Heart right ventricle (tissue), 16 donors: ENCODE measurements at regions of chr6 and their contacts with region 1.

Region 1: DNA sequence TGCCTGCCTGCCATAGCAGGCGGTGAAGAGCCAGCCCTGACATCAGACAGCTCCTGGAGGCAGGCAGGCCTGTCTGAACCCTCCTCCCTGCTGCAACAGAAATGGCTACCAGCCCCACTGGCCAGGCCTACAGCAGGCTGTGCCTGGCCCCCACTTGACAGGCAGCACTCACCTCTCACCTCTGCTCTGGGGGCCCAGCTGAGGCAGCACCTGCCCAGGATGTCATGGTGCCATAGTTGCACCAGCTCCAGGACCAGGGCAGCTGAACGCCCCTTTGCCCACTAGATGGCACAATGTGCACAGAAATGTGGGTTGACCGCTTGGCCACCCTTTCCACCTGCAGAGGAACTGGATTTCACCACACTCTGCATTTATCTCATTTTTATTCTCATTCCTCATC is 30.6 kb downstream of the MRPL14 start:
- DNase-seq: peak; percentile 67 to 76
- ATAC-seq: peak; percentile 60 to 86 (median 80)
- H3K4me3 ChIP-seq: no peak overlapping the region
- H3K27ac ChIP-seq: no peak overlapping the region
- H3K4me1 ChIP-seq: peaks cover 0 to 12% (median 0%) of the 10 kb centered on the region in 9 donors
- H3K27me3 ChIP-seq: no peaks in the 10 kb centered on the region
- CTCF ChIP-seq: peak; percentile 58 to 88 (median 81)

Region 2: GRCh38 chr6:44058617-44059358 is 37.8 kb before region 1 on chr6:
- intact Hi-C with region 1: no loop called
- DNase-seq: peak; percentile 63 to 83
- ATAC-seq: peak; percentile 50 to 85 (median 74)
- H3K4me3 ChIP-seq: peak overlapping the region in 4 of 10 donors; percentile 11 to 24 (median 14)
- H3K27ac ChIP-seq: peak overlapping the region; percentile 11 to 97 (median 76)
- H3K4me1 ChIP-seq: peaks cover 26 to 89% (median 74%) of the 10 kb centered on the region in 9 donors
- H3K27me3 ChIP-seq: no peaks in the 10 kb centered on the region
- CTCF ChIP-seq: no peak

Region 3: DNA sequence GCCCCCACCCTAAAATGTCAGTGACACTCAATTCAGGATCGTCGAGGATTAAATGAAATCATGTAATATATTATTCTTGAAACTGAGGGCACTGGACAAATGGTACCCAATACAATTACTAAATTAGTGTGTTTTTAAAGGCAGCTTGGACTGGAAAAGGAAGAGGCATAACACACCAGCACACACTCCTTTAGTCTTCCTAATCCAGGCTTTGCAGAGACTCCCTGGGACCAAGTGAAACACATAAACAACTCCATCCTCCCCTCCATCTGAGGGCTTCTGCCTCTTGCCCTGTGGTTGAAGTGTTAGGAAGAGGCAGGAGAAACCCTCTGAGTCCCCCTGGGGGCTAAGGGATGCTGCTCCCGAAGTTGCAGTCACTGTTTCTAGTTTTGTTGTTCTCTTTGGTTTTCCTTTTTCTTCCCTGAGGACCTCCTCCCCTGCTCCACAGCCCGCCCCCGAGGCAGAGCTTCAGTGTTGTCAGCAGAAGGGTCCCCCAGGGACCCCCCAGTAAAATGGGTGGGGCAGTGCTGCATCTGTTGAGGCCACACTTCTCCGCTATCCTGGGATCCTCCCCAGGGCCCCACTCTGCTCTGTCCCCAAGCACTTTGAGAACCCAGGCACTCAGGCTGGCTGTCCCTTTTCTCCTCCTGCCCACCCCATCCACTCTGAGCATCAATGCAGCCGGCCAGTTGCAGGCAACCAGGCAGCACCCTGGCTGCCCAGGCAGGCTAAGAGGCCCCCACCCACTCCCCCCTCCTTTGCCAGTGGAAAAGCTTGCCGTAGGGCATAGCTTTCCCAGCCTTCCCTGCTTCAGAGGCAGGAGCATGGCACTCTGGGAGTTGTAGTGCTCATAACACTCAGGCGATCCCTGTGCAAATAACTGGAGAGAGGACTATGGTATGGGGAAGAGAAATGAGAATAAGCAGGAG is 36.7 kb after region 1 on chr6:
- intact Hi-C with region 1: loop called in 3 of 10 experiments (anchors 5 kb)
- DNase-seq: peak; percentile 51 to 52
- ATAC-seq: peak; percentile 72 to 90 (median 80)
- H3K4me3 ChIP-seq: peak overlapping the region in 5 of 10 donors; percentile 1 to 28 (median 26)
- H3K27ac ChIP-seq: peak overlapping the region in 6 of 10 donors; percentile 31 to 57 (median 41)
- H3K4me1 ChIP-seq: peaks cover 2 to 37% (median 16%) of the 10 kb centered on the region in 9 donors
- H3K27me3 ChIP-seq: no peaks in the 10 kb centered on the region
- CTCF ChIP-seq: no peak

Region 4: DNA sequence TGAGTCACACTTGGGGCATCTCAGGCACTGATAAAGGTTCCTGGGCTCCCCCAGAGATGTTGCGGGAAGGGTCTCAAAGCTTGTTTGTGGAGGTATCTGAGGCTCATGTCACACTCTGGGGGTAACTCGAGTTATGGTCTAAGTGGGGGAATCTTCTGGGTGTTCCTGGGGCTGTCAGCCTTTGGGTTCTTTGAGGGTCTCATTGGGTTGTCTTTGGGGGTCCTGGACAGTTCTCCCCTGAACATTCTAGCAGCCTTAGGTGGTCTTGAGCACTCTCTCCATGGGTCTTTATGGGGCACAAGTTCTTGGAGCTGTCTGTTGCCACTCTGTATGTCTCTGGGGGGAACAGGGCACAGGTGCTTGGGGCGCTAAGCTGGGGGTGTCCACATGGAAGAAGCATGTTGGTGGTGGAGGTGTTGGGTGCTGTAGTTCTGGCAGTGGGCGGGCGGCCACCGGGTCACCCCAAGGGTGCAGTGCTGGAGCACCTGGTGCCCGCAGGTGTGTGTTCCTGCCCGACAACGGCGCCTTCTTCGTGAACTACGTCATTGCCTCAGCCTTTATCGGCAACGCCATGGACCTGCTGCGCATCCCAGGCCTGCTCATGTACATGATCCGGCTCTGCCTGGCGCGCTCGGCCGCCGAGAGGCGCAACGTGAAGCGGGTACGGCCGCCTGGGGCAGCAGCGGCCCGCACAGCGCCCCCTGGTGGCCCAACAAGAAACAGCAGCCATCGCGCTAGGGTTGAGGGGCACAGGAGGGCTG is 54.9 kb after region 1 on chr6:
- intact Hi-C with region 1: loop called (anchors 1 to 5 kb)
- DNase-seq: peak; percentile 62 to 78
- ATAC-seq: peak; percentile 74 to 85 (median 78)
- H3K4me3 ChIP-seq: no peak overlapping the region
- H3K27ac ChIP-seq: no peak overlapping the region
- H3K4me1 ChIP-seq: peaks cover 0 to 22% (median 4%) of the 10 kb centered on the region in 9 donors
- H3K27me3 ChIP-seq: no peaks in the 10 kb centered on the region
- CTCF ChIP-seq: peak; percentile 98 to 100 (median 99)

Region 5: GRCh38 chr6:44237813-44238433 is 141.3 kb after region 1 on chr6:
- intact Hi-C with region 1: loop called in 8 of 10 experiments (anchors 5 to 10 kb)
- DNase-seq: peak; percentile 77 to 87
- ATAC-seq: peak; percentile 76 to 87 (median 81)
- H3K4me3 ChIP-seq: peak overlapping the region; percentile 49 to 71 (median 62)
- H3K27ac ChIP-seq: peak overlapping the region; percentile 91 to 98 (median 94)
- H3K4me1 ChIP-seq: peaks cover 21 to 57% (median 49%) of the 10 kb centered on the region in 9 donors
- H3K27me3 ChIP-seq: no peaks in the 10 kb centered on the region
- CTCF ChIP-seq: peak; percentile 97 to 99 (median 98)

Region 6: GRCh38 chr6:44257025-44257752 is 160.6 kb after region 1 on chr6 and contains the start of gene SLC35B2:
- intact Hi-C with region 1: loop called in 2 of 10 experiments (anchors 5 to 10 kb)
- DNase-seq: peak; percentile 68 to 70
- ATAC-seq: peak; percentile 66 to 89 (median 76)
- H3K4me3 ChIP-seq: peak within 1 kb of the TSS; percentile 80 to 100 (median 98)
- H3K27ac ChIP-seq: peak within 1 kb of the TSS; percentile 87 to 98 (median 96)
- H3K4me1 ChIP-seq: peaks cover 11 to 58% (median 22%) of the 10 kb centered on the region in 9 donors
- H3K27me3 ChIP-seq: no peaks in the 10 kb centered on the region
- CTCF ChIP-seq: peak; percentile 55 to 94 (median 80)
- total RNA-seq, gene SLC35B2: 19.4 to 29.8 (median 23.7) TPM

Region 7: DNA sequence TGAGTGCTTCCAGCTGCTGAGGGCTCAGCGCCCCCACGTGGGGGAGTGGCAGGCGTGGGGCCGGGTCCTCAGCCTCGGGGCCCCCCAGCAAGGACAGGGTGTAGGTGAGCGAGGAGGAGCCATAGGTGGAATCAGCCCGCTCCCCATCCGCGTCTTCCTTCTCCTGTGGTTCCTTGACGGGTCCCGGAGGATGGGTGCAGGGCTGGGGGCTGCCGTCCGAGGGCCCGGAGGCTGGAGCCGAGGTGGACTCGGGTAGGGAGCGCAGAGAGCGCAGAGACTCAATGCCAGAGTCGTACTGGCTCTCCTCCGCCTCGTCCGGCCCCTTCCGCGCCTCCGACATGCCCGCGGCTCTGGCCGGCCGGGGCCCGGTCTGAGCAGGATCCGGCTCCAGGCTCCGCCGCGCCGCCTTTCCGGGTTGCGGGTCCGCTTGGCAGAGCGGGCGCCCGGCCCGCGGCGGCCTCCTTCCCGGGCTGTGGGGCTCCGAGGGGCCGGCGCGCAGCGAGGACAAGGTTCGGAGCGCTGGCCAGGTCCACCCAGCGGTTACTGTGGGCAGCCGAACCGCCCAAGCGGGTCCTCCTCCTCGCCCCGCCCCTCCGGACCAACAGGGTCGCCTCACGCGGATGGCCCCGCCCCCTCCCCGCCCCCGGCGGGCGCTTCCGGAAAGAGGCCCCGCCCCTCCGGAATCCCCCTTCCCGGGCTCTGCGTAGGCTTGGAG is 168.6 kb after region 1 on chr6 and contains the start of gene NFKBIE:
- intact Hi-C with region 1: loop called in 1 of 10 experiments (anchors 5 kb)
- DNase-seq: peak; percentile 95 to 97
- ATAC-seq: peak; percentile 89 to 95 (median 94)
- H3K4me3 ChIP-seq: peak within 1 kb of the TSS; percentile 66 to 98 (median 82)
- H3K27ac ChIP-seq: peak within 1 kb of the TSS; percentile 34 to 93 (median 76)
- H3K4me1 ChIP-seq: peaks cover 18 to 46% (median 28%) of the 10 kb centered on the region in 9 donors
- H3K27me3 ChIP-seq: peaks cover 5 to 27% (median 15%) of the 10 kb centered on the region in 7 donors
- CTCF ChIP-seq: peak in 7 of 9 donors; percentile 16 to 38 (median 35)
- total RNA-seq, gene NFKBIE: 1.5 to 8.7 (median 3.4) TPM

Region 8: DNA sequence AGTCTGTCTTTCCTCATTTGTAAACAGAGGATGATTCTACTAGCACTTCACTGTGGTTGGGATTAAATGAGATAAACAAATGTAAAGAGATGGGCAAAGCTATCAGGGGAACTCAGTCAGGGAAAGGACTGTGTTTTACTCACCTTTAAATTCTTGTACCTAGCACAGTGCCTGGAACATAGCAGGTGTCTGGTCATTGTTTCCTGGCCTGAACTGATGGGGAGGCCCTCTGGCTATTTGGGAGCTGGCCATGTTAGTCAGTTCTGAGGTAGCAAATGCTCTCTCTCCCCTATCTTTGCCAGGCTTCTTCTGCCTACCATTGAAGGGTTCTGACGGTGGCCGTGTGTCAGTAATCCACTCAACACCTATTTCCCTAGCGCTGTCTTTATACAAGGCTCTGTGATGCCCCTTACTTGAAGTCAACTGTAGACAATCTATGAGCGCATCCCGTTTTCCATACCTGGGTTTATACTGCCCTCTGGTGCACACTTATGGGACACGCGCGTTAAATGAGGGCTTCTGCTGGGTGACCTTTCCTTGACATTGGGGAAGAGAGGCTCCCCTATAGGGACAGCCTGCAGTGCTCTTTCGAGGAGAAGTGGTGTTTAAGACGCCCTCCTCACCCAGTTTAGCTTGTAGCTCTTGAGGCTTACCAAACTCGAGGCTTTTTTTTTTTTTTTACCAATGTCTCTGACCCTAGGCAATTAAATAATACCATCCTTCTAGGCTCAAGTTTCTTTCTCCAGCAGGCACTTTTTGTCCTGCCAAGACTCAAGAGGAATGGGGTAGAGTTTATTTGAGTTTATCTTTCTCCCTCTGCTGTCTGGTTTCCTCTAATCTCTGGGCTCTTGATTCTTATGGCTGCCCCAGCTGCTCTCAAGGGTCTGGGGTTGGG is 241.9 kb after region 1 on chr6:
- intact Hi-C with region 1: loop called in 8 of 10 experiments (anchors 5 to 10 kb)
- DNase-seq: peak; percentile 35 to 53
- ATAC-seq: peak; percentile 67 to 83 (median 74)
- H3K4me3 ChIP-seq: no peak overlapping the region
- H3K27ac ChIP-seq: no peak overlapping the region
- H3K4me1 ChIP-seq: peaks cover 0 to 13% (median 5%) of the 10 kb centered on the region in 9 donors
- H3K27me3 ChIP-seq: peaks cover 0 to 33% (median 11%) of the 10 kb centered on the region in 7 donors
- CTCF ChIP-seq: peak; percentile 48 to 76 (median 72)